Activated CD4-positive, alpha-beta T cell treated with anti-CD3 and anti-CD28 coated beads, Interleukin-2, amount 10 ng/mL, durations not matched to agents 24 days and 14 days (primary cell): ENCODE measurements at regions of chr13 and their contacts with region 1.

Region 1: GRCh38 chr13:109786457-109787134 is at the start of gene IRS2:
- DNase-seq: peak; percentile 97
- H3K4me3 Mint-ChIP-seq: peak within 1 kb of the TSS; percentile 82
- H3K27ac Mint-ChIP-seq: peak within 1 kb of the TSS; percentile 64
- H3K4me1 Mint-ChIP-seq: peaks cover 10% of the 10 kb centered on the region
- H3K27me3 Mint-ChIP-seq: peaks cover 28% of the 10 kb centered on the region
- total RNA-seq, gene IRS2: 3.2 and 3.5 TPM in 2 replicates

Region 2: GRCh38 chr13:108915634-108916512 is 870.7 kb before region 1 on chr13:
- intact Hi-C with region 1: loop called (anchors 1 kb)
- DNase-seq: peak; percentile 93
- H3K4me3 Mint-ChIP-seq: peak overlapping the region; percentile 77
- H3K27ac Mint-ChIP-seq: peak overlapping the region; percentile 93
- H3K4me1 Mint-ChIP-seq: peaks cover 29% of the 10 kb centered on the region
- H3K27me3 Mint-ChIP-seq: peaks cover 14% of the 10 kb centered on the region

Region 3: GRCh38 chr13:109145631-109146030 is 641.0 kb before region 1 on chr13:
- intact Hi-C with region 1: loop called (anchors 10 kb)
- DNase-seq: peak; percentile 61
- H3K4me3 Mint-ChIP-seq: no peak overlapping the region
- H3K27ac Mint-ChIP-seq: no peak overlapping the region
- H3K4me1 Mint-ChIP-seq: no peaks in the 10 kb centered on the region
- H3K27me3 Mint-ChIP-seq: peaks cover 19% of the 10 kb centered on the region

Region 4: DNA sequence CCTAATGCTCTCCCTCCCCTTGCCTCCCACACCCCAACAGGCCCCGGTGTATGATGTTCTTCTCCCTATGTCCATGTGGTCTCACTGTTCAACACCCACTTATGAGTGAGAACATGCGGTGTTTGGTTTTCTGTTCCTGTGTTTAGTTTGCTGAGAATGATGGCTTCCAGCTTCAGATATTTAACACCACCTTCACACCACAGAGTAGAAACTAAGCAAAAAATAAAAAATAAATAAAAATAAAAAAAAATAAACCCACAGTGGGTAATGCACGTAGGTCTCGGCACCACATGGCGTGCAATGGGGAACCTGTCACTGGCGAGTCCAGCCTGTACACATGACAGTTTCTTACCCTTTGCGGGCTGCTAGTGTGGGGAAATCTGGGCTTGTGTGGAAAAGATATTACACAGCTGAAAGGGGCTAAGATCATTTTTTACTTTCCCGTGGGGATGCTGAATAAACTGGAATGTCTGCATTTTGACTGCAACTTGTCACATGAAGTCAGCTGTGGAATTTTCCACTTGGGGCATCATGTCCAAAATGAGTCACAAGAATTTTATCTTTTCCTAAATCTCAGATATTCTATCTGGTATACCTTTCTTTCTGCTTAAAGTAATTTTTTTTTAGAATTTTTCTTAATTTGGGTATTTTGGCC is 170.7 kb before region 1 on chr13:
- intact Hi-C with region 1: no loop called
- DNase-seq: no peak
- H3K4me3 Mint-ChIP-seq: no peak overlapping the region
- H3K27ac Mint-ChIP-seq: no peak overlapping the region
- H3K4me1 Mint-ChIP-seq: no peaks in the 10 kb centered on the region
- H3K27me3 Mint-ChIP-seq: peaks cover 4% of the 10 kb centered on the region

Region 5: GRCh38 chr13:109694972-109695371 is 91.6 kb before region 1 on chr13:
- intact Hi-C with region 1: loop called (anchors 5 kb)
- DNase-seq: no peak
- H3K4me3 Mint-ChIP-seq: no peak overlapping the region
- H3K27ac Mint-ChIP-seq: no peak overlapping the region
- H3K4me1 Mint-ChIP-seq: no peaks in the 10 kb centered on the region
- H3K27me3 Mint-ChIP-seq: peaks cover 9% of the 10 kb centered on the region

Region 6: DNA sequence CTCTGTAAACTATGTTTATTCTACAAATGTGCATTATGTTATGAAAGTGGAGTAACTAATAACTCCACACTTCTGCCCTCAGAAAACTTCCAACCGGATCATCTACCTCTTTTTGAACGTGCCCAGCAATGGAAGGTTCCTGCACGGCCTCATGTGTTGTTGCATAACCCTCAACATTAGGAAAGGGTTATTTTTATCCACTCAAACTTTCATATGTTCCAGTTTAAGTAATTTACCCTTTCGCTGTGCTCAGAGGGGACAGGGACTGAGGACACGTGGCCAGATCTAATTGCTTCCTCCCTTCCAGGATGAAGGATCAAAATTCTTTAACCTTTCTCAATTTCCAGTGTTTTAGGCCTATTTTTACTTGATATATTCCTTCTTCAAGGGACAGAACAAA is 29.8 kb before region 1 on chr13:
- intact Hi-C with region 1: no loop called
- DNase-seq: no peak
- H3K4me3 Mint-ChIP-seq: no peak overlapping the region
- H3K27ac Mint-ChIP-seq: no peak overlapping the region
- H3K4me1 Mint-ChIP-seq: no peaks in the 10 kb centered on the region
- H3K27me3 Mint-ChIP-seq: no peaks in the 10 kb centered on the region

Region 7: DNA sequence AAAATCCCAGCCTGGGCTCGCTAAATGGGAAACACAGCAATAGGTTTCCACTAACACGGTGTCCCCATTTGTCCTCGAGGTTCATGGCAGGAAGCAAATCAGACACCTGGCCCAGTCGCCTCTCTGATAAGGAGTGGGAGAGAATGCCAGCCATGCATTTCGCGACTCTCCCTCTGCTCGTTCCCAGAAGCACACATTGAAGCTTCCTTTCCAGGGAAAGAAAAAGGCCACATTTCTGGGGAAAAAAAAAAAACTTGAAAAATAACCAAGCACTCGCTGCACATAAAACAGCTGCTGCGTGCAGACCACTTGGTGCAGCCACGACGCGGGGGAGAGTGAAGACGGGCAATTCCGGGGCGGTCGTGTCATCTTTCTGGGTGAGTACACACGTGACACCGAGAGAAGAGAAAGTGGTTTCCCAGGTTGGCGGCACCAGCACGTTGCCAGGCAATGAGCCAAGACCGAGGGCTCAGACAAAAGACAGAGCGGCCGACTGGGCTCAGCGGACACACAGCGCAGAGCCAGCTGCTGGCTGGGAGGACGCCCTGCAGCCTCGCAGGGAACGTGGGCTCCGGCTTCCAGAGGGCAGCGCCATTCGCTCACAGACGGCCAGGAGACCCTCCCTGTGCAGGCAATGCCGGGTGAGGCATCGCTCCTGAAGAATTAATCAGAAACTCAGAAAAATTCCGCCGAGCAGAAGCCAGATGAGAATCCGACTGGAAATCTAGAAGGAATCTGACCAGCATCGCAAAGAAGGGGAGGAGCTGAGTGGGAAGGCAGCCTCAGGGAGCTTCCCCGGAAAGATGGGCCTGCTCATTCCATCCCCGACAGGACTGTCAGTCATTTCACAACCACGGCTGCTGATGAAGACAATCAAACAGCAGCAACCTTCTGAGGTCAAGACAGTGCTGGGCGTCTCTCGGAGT is 83.0 kb after region 1 on chr13:
- intact Hi-C with region 1: no loop called
- DNase-seq: peak; percentile 54
- H3K4me3 Mint-ChIP-seq: no peak overlapping the region
- H3K27ac Mint-ChIP-seq: no peak overlapping the region
- H3K4me1 Mint-ChIP-seq: no peaks in the 10 kb centered on the region
- H3K27me3 Mint-ChIP-seq: peaks cover 19% of the 10 kb centered on the region

Region 8: DNA sequence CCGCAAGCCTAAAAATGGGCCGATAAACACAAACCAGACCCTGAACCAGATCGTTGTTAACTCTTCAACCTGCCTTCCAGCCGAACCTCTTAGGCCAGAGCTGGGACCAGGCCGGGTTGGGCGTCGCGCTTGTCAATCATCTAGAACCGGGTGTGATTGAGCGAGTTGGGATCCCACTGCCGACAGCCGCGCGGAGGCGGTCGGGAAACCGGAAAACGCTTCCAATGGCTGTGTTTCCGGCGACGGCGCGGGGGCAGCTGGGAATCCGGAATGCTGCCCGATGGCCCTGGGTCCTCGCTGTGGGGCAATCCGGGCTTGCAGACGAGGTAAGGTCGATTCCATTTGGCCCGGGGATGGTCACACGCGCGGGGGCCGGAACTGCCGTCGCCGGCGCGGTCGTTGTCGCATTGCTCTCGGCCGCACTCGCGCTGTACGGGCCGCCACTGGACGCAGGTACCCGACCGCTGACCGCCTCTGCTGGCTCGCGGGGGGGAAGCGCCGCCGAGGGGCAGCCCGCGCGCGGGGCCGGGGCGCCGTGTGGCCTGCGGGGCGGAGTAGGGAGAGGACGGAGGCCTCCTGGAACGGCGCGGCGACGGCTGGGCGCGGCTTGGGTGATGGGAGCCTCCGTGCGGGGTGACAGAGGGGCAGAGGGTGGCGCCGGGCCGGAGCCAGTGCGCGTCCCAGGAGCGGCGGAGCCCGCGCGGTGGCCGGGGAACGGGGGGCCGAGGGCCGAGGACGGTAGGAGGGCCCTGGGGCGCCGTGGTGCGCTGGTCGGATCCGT is 828.9 kb after region 1 on chr13 and contains the start of gene NAXD:
- intact Hi-C with region 1: loop called (anchors 5 kb)
- DNase-seq: peak; percentile 94
- H3K4me3 Mint-ChIP-seq: peak within 1 kb of the TSS; percentile 95
- H3K27ac Mint-ChIP-seq: peak within 1 kb of the TSS; percentile 95
- H3K4me1 Mint-ChIP-seq: peaks cover 26% of the 10 kb centered on the region
- H3K27me3 Mint-ChIP-seq: peaks cover 2% of the 10 kb centered on the region
- total RNA-seq, gene NAXD: 20.6 and 23.7 TPM in 2 replicates